Right ventricle myocardium inferior (tissue), 1 donor: ENCODE measurements at regions of chr17 and their contacts with region 1.

Region 1: GRCh38 chr17:34637548-34638525 is 58.5 kb downstream of the TMEM132E start:
- DNase-seq: peak; percentile 84
- ATAC-seq: peak; percentile 86

Region 2: DNA sequence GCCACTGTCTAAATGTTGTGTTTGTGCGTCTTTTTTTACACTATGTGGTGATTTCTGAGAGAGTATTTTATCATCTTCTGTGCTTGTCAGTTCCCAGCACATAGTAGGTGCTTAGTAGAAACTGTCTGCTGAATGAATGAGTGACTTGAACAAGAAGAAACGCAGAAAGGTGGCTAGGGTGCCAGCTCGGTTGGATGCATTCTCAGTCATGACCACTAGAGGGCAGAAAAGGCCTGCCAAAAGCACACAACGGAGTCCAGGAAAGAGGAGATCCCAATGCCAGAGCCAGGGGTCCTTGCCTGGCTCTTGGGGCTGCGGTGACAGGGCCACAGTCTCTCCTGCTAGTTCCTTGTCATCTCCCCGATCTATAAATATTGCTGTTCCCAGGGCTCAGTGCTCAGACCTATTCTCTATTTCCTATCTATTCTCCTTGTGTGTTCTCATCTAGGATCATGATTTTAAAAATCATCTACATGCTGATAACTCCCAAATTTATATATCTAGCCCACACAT is 217.5 kb before region 1 on chr17:
- intact Hi-C with region 1: loop called (anchors 2 kb)
- DNase-seq: no peak
- ATAC-seq: no peak

Region 3: DNA sequence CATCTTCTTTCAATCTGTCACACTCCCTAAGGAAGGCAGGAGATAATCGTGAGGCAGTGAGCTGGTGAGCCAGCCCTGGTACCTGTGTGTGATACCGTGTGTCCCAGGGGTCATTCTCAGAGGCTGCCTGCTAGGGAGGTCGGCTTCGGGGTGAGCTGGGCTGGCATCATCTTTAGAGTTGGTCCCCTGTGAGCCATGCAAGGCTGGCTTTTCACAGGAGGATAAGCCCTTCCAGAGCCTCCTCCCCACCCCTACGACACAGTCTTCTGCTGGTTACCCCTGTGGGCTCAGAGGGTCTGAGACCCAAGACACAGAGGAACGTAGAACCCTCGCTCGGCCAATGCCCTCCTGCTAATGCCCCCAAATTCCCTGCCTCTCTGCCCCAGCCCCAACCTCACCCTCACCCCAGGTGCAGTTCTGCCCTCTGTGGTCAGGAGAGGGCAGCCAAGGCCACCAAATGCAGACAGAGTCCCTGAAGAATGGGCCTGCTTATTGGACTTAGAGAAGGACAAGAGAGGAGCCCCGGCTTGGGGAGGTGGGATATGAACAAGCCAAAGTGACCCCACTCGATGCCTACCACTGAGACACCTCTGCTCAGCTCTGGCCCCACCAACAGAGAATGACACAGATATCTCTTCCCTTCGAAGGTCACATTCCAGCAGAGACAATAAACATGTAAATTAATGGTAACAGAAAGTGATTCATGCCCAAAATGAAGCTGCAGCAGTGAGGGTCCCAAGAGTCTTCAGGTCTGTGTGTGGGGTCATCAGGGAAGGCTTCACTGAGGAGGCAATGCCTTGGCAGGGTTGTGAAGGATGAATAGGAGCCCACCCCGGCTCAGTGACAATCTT is 194.0 kb before region 1 on chr17:
- intact Hi-C with region 1: loop called (anchors 2 kb)
- DNase-seq: peak; percentile 58
- ATAC-seq: peak; percentile 62

Region 4: GRCh38 chr17:34542700-34543336 is 95.0 kb before region 1 on chr17:
- intact Hi-C with region 1: loop called (anchors 10 kb)
- DNase-seq: no peak
- ATAC-seq: no peak